Activated CD8-positive, alpha-beta T cell treated with anti-CD3 and anti-CD28 coated beads for 36 hours (primary cell): ENCODE measurements at regions of chr9 and their contacts with region 1.

Region 1: GRCh38 chr9:115013998-115014397 is 83.6 kb upstream of the TNFSF8 start:
- DNase-seq: peak; percentile 80
- ATAC-seq: peak; percentile 87
- H3K4me3 Mint-ChIP-seq: no peak overlapping the region
- H3K27ac Mint-ChIP-seq: peak overlapping the region; percentile 36
- H3K4me1 Mint-ChIP-seq: peaks cover 40% of the 10 kb centered on the region
- H3K27me3 Mint-ChIP-seq: no peaks in the 10 kb centered on the region
- CTCF ChIP-seq: peak; percentile 72

Region 2: GRCh38 chr9:114674798-114675540 is 339.0 kb before region 1 on chr9:
- CTCF ChIA-PET with region 1: interaction called, 117 read pairs
- POLR2A ChIA-PET with region 1: interaction called, 3 read pairs
- intact Hi-C with region 1: no loop called
- DNase-seq: no peak
- ATAC-seq: peak; percentile 27
- H3K4me3 Mint-ChIP-seq: no peak overlapping the region
- H3K27ac Mint-ChIP-seq: no peak overlapping the region
- H3K4me1 Mint-ChIP-seq: peaks cover 42% of the 10 kb centered on the region
- H3K27me3 Mint-ChIP-seq: peaks cover 11% of the 10 kb centered on the region
- CTCF ChIP-seq: no peak

Region 3: DNA sequence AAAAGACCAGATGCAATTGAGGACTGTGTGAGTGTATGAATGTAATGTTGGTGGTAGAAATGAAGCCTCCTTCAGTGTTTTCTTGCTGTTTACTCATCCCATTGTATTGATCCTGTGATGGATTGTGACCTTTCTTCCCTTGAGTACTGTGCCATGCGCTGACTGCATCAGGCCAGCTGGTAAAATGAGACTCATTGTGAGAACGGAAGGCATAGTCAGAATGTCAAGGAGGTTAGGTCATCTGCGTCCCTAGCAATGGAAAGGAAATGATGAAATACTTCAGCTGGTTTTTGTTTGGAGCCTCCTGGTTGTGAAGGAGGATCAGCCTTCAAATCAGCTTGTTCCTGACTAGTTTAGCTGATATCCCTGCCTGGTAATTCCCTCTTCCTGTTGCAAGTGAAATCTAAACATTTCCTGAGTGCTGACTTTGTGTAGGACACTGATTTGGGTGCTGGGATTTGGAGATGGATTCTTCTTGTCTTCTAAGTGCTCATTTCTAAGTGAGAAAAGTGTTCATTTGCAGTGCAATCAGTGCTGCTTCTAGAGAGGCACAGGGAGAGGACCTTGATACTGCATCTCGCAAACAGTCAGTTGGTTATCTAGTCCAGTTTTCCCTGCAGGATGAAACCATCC is 119.1 kb before region 1 on chr9:
- CTCF ChIA-PET with region 1: interaction called, 10 read pairs
- POLR2A ChIA-PET with region 1: no interaction called
- intact Hi-C with region 1: no loop called
- DNase-seq: peak; percentile 78
- ATAC-seq: peak; percentile 65
- H3K4me3 Mint-ChIP-seq: no peak overlapping the region
- H3K27ac Mint-ChIP-seq: peak overlapping the region; percentile 86
- H3K4me1 Mint-ChIP-seq: peaks cover 54% of the 10 kb centered on the region
- H3K27me3 Mint-ChIP-seq: no peaks in the 10 kb centered on the region
- CTCF ChIP-seq: no peak

Region 4: GRCh38 chr9:114930056-114930812 is 83.8 kb before region 1 on chr9 and contains the start of gene TNFSF8:
- CTCF ChIA-PET with region 1: interaction called, 14 read pairs
- POLR2A ChIA-PET with region 1: interaction called, 6 read pairs
- intact Hi-C with region 1: loop called (anchors 5 kb)
- DNase-seq: peak; percentile 91
- ATAC-seq: peak; percentile 87
- H3K4me3 Mint-ChIP-seq: peak within 1 kb of the TSS; percentile 89
- H3K27ac Mint-ChIP-seq: peak within 1 kb of the TSS; percentile 98
- H3K4me1 Mint-ChIP-seq: peaks cover 47% of the 10 kb centered on the region
- H3K27me3 Mint-ChIP-seq: no peaks in the 10 kb centered on the region
- CTCF ChIP-seq: no peak
- total RNA-seq, gene TNFSF8: 21.7 to 23.9 TPM

Region 5: DNA sequence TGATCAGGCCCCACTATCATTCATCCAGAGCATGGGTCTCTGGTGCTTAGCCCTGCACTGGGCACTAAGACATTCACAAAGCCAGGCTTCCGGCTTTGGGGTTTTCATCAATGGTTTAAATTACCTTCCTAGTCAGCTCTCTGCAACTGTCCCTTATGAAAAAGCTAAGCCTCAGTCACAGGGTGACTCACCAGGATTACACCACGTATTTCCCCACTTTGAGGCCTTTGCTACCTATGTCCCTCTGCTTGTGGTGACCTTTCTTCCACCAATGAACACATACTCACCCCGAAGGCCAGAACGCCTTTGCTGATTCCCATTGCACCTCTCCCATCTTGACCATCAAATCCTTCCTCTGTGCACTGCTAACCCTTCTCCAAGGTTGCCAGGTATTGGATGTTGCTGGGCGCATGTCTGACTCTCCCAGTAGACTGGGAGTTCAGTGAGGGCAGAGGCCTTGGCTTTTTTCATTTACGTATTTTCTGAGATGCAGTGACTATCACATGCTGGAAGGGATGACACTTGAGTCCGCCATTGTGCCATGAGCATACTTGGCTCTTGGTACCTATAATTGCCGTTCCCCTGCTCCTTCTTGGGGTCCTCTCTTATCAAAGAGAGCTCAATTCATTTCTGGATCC is 24.9 kb before region 1 on chr9:
- CTCF ChIA-PET with region 1: interaction called, 11 read pairs
- POLR2A ChIA-PET with region 1: no interaction called
- intact Hi-C with region 1: no loop called
- DNase-seq: peak; percentile 68
- ATAC-seq: peak; percentile 67
- H3K4me3 Mint-ChIP-seq: peak overlapping the region; percentile 8
- H3K27ac Mint-ChIP-seq: peak overlapping the region; percentile 93
- H3K4me1 Mint-ChIP-seq: peaks cover 51% of the 10 kb centered on the region
- H3K27me3 Mint-ChIP-seq: no peaks in the 10 kb centered on the region
- CTCF ChIP-seq: no peak

Region 6: GRCh38 chr9:115071176-115071575 is 57.2 kb after region 1 on chr9:
- CTCF ChIA-PET with region 1: no interaction called
- POLR2A ChIA-PET with region 1: no interaction called
- intact Hi-C with region 1: no loop called
- DNase-seq: no peak
- ATAC-seq: no peak
- H3K4me3 Mint-ChIP-seq: no peak overlapping the region
- H3K27ac Mint-ChIP-seq: no peak overlapping the region
- H3K4me1 Mint-ChIP-seq: no peaks in the 10 kb centered on the region
- H3K27me3 Mint-ChIP-seq: peaks cover 18% of the 10 kb centered on the region
- CTCF ChIP-seq: no peak